Common myeloid progenitor, CD34-positive (primary cell): ENCODE measurements at regions of chr1 and their contacts with region 1.

Region 1: GRCh38 chr1:65404941-65405340 is 15.5 kb upstream of the LEPR start:
- DNase-seq: no peak
- H3K4me3 ChIP-seq: no peak overlapping the region
- H3K27ac ChIP-seq: no peak overlapping the region
- H3K4me1 ChIP-seq: no peaks in the 10 kb centered on the region
- H3K27me3 ChIP-seq: no peaks in the 10 kb centered on the region

Region 2: GRCh38 chr1:65419681-65420589 is 15.0 kb after region 1 on chr1:
- CTCF ChIA-PET with region 1: interaction called, 10 read pairs
- POLR2A ChIA-PET with region 1: no interaction called
- DNase-seq: peak; percentile 97 to 99 (median 98)
- H3K4me3 ChIP-seq: peak overlapping the region; percentile 48 to 93 (median 82)
- H3K27ac ChIP-seq: peak overlapping the region; percentile 57 to 97
- H3K4me1 ChIP-seq: peaks cover 9 to 44% (median 27%) of the 10 kb centered on the region in 4 experiments
- H3K27me3 ChIP-seq: no peaks in the 10 kb centered on the region